ENCODE measurements at regions of chr18 and their contacts with region 1.

Region 1: GRCh38 chr18:58788971-58789875 is 75.5 kb upstream of the ZNF532 start:
- DNase-seq: peak; percentile 96
- H3K4me3 ChIP-seq: peak overlapping the region in 1 of 3 experiments; percentile 5
- H3K27ac ChIP-seq: peak overlapping the region; percentile 98
- H3K4me1 ChIP-seq: peaks cover 43% of the 10 kb centered on the region
- H3K27me3 ChIP-seq: no peaks in the 10 kb centered on the region
- CTCF ChIP-seq: no peak
- POLR2A ChIP-seq: peak; percentile 20

Region 2: GRCh38 chr18:58438161-58438957 is 350.9 kb before region 1 on chr18:
- CTCF ChIA-PET with region 1: no interaction called
- POLR2A ChIA-PET with region 1: no interaction called
- dilution Hi-C with region 1: no loop called
- intact Hi-C with region 1: no loop called
- DNase-seq: no peak
- H3K4me3 ChIP-seq: no peak overlapping the region
- H3K27ac ChIP-seq: no peak overlapping the region
- H3K4me1 ChIP-seq: no peaks in the 10 kb centered on the region
- H3K27me3 ChIP-seq: peaks cover 5 to 7% of the 10 kb centered on the region in 2 experiments
- CTCF ChIP-seq: no peak
- POLR2A ChIP-seq: no peak

Region 3: GRCh38 chr18:58863539-58864145 is 74.4 kb after region 1 on chr18:
- CTCF ChIA-PET with region 1: no interaction called
- POLR2A ChIA-PET with region 1: no interaction called
- dilution Hi-C with region 1: no loop called
- intact Hi-C with region 1: loop called (anchors 1 kb)
- DNase-seq: peak; percentile 31
- H3K4me3 ChIP-seq: peak overlapping the region in 1 of 3 experiments; percentile 39
- H3K27ac ChIP-seq: peak overlapping the region; percentile 77
- H3K4me1 ChIP-seq: peaks cover 38% of the 10 kb centered on the region
- H3K27me3 ChIP-seq: no peaks in the 10 kb centered on the region
- CTCF ChIP-seq: peak in 1 of 2 donors; percentile 27
- POLR2A ChIP-seq: no peak

Region 4: GRCh38 chr18:58911766-58912165 is 122.5 kb after region 1 on chr18:
- CTCF ChIA-PET with region 1: no interaction called
- POLR2A ChIA-PET with region 1: no interaction called
- dilution Hi-C with region 1: no loop called
- intact Hi-C with region 1: loop called (anchors 1 kb)
- DNase-seq: peak; percentile 62
- H3K4me3 ChIP-seq: no peak overlapping the region
- H3K27ac ChIP-seq: no peak overlapping the region
- H3K4me1 ChIP-seq: peaks cover 32% of the 10 kb centered on the region
- H3K27me3 ChIP-seq: no peaks in the 10 kb centered on the region
- CTCF ChIP-seq: no peak
- POLR2A ChIP-seq: no peak

Region 5: DNA sequence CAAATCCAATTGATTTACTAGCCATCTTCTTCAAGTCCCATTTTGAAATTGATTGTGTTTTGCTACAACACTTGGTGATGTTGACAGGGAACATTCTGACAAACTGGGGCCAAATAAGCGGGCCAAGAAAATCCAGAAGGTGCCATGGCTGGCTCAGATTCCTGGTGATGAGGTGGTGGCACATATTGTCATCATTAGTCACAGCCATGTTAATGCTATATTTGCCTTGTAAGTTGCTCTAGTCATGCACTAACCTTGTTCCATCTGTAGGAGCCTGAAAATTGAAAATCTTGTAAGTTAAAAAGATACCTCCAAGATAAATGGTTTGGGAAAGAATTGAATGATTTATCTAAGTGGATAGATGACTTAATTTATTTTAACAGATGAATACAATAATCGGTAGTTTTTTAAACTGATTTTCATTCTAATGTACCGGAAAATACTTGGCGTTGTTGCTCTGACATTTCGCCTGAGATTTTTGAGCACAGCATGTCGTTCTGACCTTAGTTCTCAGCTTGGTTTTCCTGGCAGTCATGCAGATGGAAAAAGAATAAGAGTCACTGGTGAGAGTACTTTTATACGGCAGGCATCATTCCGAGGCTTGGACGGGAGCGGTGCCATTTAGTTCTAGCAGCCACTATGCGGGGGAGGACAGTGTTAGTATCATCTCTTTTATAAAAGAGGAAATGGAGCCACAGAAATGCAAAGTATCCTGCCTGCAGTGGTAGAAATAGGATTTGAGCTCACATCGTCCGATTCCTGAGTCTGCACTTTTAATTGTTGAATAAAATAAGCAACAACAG is 209.4 kb after region 1 on chr18:
- CTCF ChIA-PET with region 1: no interaction called
- POLR2A ChIA-PET with region 1: no interaction called
- dilution Hi-C with region 1: no loop called
- intact Hi-C with region 1: loop called (anchors 1 kb)
- DNase-seq: no peak
- H3K4me3 ChIP-seq: no peak overlapping the region
- H3K27ac ChIP-seq: no peak overlapping the region
- H3K4me1 ChIP-seq: peaks cover 23% of the 10 kb centered on the region
- H3K27me3 ChIP-seq: no peaks in the 10 kb centered on the region
- CTCF ChIP-seq: no peak
- POLR2A ChIP-seq: no peak

Measured in endothelial cell of umbilical vein (primary cell).